Dorsolateral prefrontal cortex (tissue), 120 donors: ENCODE measurements at regions of chr2 and their contacts with region 1.

Region 1: DNA sequence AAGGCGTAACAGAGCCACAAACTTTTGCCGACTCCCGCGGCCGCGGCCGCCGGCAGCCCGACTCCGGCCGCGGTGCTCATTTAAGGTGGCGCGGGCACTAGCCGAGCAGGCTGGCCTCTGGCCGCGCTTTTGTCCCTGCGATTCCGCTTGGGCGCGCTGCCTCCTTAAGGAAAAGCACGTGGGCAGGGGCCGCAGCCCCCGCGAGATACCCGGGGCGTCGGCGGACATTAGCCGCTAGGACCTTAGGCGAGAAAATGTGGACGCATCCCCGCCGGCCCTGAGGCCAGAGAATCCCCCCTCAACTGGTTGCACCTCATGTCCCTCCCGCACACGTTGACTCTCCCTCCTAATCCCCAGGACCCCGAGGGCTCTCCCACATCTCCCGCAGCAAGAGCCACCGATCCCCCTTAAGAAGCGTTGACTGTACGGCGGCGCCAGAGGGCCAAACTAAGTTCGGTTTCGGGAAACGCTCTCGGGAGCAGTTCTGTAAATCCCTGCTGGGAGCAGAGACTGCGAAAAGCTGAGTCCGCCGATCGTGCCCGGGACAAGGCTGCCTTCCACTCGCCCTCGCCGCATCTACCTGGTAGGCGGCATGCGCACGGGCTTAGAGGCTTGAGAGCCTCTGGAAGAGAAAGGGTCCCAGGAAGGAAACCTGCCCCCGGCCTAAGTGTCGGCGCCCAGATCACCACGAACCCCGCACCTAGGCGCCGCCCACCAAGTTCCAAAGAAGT is 1.7 kb upstream of the SATB2 start:
- DNase-seq: peak; percentile 88 to 95 (median 92)
- H3K4me3 ChIP-seq: peak overlapping the region; percentile 61 to 100 (median 91)
- H3K27ac ChIP-seq: peak overlapping the region in 58 of 59 donors; percentile 65 to 96 (median 90)
- H3K27me3 ChIP-seq: peaks cover 0 to 69% (median 40%) of the 10 kb centered on the region in 45 donors
- CTCF ChIP-seq: peak in 28 of 56 donors; percentile 5 to 57 (median 20)

Region 2: DNA sequence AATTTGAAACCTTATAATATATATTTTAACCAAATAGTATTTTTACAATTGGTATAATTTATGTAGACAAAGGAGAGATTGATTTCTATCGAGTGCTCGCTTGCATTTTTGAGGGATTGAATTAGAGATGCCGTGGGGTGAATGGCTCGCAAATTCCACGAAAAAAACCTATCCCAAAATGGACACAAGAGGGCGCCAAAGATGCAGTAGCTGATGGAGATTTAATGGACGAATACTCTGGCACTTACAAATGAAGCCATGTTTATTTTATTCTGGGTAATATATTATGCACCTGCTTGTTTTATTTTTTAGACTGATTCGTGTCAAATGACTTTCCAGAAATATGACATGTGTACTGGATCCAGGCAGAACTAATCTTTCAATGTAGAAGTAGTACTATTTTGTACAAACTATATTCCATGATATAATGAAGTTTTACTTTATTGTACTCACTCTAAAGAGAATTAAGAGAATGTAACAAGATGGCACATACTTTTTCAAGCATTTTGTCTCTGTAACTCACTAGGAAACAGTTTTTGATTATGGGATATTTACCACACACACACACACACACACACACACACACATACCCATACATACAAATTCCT is 1149.7 kb before region 1 on chr2:
- intact Hi-C with region 1: loop called in 1 of 2 experiments (anchors 2 kb)
- DNase-seq: peak in 4 of 10 donors; percentile 14 to 68 (median 46)
- H3K4me3 ChIP-seq: peak overlapping the region in 1 of 59 donors; percentile 22
- H3K27ac ChIP-seq: no peak overlapping the region
- H3K27me3 ChIP-seq: peaks cover 0 to 8% (median 0%) of the 10 kb centered on the region in 45 donors
- CTCF ChIP-seq: peak; percentile 73 to 97 (median 88)

Region 3: GRCh38 chr2:198374375-198375082 is 1084.9 kb before region 1 on chr2:
- intact Hi-C with region 1: loop called (anchors 5 kb)
- DNase-seq: peak in 6 of 10 donors; percentile 38 to 73 (median 48)
- H3K4me3 ChIP-seq: peak overlapping the region in 26 of 59 donors; percentile 2 to 41 (median 24)
- H3K27ac ChIP-seq: peak overlapping the region in 27 of 59 donors; percentile 1 to 70 (median 45)
- H3K27me3 ChIP-seq: peaks cover 0 to 3% (median 0%) of the 10 kb centered on the region in 45 donors
- CTCF ChIP-seq: peak; percentile 56 to 86 (median 77)

Region 4: GRCh38 chr2:199019898-199020507 is 439.4 kb before region 1 on chr2:
- intact Hi-C with region 1: loop called in 1 of 2 experiments (anchors 10 kb)
- DNase-seq: no peak
- H3K4me3 ChIP-seq: no peak overlapping the region
- H3K27ac ChIP-seq: no peak overlapping the region
- H3K27me3 ChIP-seq: no peaks in the 10 kb centered on the region
- CTCF ChIP-seq: peak in 54 of 56 donors; percentile 17 to 70 (median 48)

Region 5: GRCh38 chr2:199261239-199261638 is 198.2 kb before region 1 on chr2:
- intact Hi-C with region 1: loop called in 1 of 2 experiments (anchors 10 kb)
- DNase-seq: peak in 1 of 10 donors; percentile 44
- H3K4me3 ChIP-seq: no peak overlapping the region
- H3K27ac ChIP-seq: no peak overlapping the region
- H3K27me3 ChIP-seq: no peaks in the 10 kb centered on the region
- CTCF ChIP-seq: peak in 7 of 56 donors; percentile 9 to 37 (median 14)

Region 6: DNA sequence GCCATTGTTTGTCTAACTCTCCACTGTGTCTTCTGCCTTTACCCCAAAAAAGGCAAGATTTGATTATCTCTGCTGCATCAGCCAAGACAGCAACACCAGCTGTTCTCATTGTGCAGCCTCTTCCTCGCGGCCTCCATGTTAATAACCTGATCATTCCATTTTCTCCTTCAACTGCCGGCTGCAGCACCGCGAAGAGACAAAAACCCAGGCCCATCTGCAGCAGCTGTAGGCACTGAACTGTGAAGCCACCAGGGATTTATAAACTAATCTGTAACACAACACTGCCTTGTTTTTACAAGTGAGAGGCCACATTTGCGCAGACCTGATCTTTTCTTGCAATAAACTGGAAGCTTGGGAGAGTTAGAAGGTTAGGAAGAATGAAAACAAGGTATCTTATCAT is 149.5 kb before region 1 on chr2:
- intact Hi-C with region 1: no loop called
- DNase-seq: no peak
- H3K4me3 ChIP-seq: no peak overlapping the region
- H3K27ac ChIP-seq: peak overlapping the region in 12 of 59 donors; percentile 2 to 48 (median 29)
- H3K27me3 ChIP-seq: no peaks in the 10 kb centered on the region
- CTCF ChIP-seq: no peak

Region 7: DNA sequence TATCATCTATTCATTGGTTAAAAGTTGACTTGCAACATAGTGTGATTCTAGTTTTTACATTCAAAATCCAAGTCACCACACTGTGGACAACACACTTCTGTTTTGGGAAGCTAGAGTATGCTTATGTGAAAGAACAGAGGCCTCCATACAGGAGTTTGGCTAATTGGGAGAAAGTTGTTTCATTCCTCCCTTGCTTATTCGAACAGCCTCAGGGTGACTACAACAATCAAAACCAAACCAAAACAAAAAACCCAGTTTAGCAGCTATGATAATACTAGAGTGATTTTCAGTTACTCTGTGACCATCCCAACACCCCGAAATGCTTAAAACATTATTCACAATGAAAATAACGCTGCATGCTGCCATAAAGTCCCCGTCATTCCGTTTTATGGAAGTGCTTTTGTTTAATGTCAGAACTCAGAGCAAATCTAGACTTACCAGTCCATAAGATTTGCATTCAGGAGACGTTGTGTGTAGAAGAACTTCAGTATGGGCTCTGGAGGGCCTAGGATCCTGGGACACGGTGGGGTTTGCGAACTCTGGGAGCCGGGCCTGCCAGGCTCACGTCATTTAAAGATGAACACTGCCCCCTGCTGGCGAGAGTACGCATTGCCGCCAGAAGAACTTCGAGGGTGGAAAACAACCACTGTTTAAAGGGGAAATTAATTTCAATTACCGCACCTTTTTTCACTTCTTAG is 280.1 kb after region 1 on chr2:
- intact Hi-C with region 1: loop called in 1 of 2 experiments (anchors 10 kb)
- DNase-seq: peak; percentile 33 to 86 (median 78)
- H3K4me3 ChIP-seq: peak overlapping the region in 55 of 59 donors; percentile 2 to 60 (median 32)
- H3K27ac ChIP-seq: peak overlapping the region in 8 of 59 donors; percentile 12 to 63 (median 48)
- H3K27me3 ChIP-seq: no peaks in the 10 kb centered on the region
- CTCF ChIP-seq: peak; percentile 90 to 100 (median 98)